ENCODE measurements at regions of chr1 and their contacts with region 1.

Region 1: DNA sequence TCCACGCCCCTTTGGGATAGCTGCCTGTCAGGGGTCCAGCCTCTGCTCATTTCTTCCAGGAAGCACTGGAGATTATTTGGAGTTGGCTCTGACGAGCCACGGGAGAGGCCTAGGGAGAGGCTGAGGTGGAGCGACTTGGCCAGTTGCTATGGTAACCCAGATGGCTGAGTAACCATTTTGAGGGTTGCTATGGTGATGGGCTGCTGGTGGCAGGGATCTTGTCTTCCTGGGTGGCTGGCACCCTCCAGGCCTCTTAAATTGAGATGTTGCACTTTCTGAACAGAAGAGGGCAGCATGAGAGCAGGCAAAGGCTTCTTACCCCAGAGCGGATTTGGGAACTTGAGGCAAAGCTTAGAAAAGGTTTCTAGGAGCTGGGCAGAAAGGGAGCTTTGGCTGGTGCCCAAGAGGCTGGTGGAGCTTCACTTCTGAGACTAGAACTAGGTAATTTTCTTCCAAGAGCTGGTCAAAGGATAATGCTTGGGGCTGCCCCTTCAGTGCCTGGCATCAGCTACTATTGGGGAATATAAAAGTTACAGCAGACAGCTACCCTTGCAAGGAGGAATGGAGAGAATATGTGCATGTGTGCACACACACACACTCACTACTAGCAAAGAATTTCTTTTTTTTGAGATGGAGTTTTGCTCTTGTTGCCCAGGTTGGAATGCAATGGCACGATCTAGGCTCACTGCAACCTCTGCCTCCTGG is 72.5 kb downstream of the NDUFS5 start:
- DNase-seq: peak; percentile 89
- H3K4me3 Mint-ChIP-seq: no peak overlapping the region
- H3K27ac Mint-ChIP-seq: peak overlapping the region; percentile 31
- H3K4me1 Mint-ChIP-seq: peaks cover 20% of the 10 kb centered on the region
- H3K27me3 Mint-ChIP-seq: no peaks in the 10 kb centered on the region

Region 2: DNA sequence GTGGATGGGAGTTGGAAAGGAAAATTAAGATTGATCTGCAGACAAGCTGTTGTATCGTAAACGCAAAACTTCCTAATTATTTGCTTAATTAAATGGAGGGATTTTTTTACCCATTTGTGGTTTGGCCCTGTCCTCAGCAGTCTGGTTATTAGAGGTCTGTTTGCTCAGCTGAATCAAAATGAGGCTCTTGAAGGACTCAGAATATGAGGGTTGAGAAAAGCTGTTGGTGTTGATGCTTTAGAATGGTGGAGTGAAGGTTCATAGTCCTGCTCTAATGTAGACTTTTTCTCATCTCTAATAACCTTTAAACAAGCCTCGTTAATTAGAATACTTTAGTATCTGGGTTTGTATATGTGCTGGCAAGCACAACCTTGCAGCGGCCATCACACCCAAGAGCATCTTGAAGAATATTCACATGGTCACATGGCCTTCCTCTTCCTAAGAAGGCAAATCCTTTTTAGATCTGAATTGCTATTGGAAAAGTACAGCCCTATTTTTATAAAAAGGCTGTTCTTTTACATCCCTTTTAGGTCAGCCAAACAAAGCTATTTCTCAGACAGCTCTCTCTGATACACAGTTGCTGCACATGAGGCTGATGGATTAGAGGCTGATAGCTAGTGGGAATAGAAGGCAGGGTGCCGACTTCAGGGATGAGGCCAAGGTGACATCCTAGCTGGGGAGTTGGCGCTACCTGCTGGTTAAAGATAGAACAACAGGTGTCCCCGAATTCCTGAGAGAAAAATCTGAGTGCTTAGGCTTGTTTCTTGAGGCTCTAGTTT is 159.6 kb after region 1 on chr1:
- intact Hi-C with region 1: loop called (anchors 1 kb)
- DNase-seq: peak; percentile 88
- H3K4me3 Mint-ChIP-seq: no peak overlapping the region
- H3K27ac Mint-ChIP-seq: peak overlapping the region; percentile 57
- H3K4me1 Mint-ChIP-seq: peaks cover 21% of the 10 kb centered on the region
- H3K27me3 Mint-ChIP-seq: no peaks in the 10 kb centered on the region

Region 3: GRCh38 chr1:39408641-39409054 is 309.9 kb after region 1 on chr1:
- intact Hi-C with region 1: loop called (anchors 10 kb)
- DNase-seq: peak; percentile 96
- H3K4me3 Mint-ChIP-seq: peak overlapping the region; percentile 90
- H3K27ac Mint-ChIP-seq: no peak overlapping the region
- H3K4me1 Mint-ChIP-seq: peaks cover 50% of the 10 kb centered on the region
- H3K27me3 Mint-ChIP-seq: no peaks in the 10 kb centered on the region

Region 4: GRCh38 chr1:39538588-39539465 is 440.1 kb after region 1 on chr1:
- intact Hi-C with region 1: loop called (anchors 1 kb)
- DNase-seq: peak; percentile 84
- H3K4me3 Mint-ChIP-seq: no peak overlapping the region
- H3K27ac Mint-ChIP-seq: peak overlapping the region; percentile 36
- H3K4me1 Mint-ChIP-seq: peaks cover 2% of the 10 kb centered on the region
- H3K27me3 Mint-ChIP-seq: no peaks in the 10 kb centered on the region

Region 5: DNA sequence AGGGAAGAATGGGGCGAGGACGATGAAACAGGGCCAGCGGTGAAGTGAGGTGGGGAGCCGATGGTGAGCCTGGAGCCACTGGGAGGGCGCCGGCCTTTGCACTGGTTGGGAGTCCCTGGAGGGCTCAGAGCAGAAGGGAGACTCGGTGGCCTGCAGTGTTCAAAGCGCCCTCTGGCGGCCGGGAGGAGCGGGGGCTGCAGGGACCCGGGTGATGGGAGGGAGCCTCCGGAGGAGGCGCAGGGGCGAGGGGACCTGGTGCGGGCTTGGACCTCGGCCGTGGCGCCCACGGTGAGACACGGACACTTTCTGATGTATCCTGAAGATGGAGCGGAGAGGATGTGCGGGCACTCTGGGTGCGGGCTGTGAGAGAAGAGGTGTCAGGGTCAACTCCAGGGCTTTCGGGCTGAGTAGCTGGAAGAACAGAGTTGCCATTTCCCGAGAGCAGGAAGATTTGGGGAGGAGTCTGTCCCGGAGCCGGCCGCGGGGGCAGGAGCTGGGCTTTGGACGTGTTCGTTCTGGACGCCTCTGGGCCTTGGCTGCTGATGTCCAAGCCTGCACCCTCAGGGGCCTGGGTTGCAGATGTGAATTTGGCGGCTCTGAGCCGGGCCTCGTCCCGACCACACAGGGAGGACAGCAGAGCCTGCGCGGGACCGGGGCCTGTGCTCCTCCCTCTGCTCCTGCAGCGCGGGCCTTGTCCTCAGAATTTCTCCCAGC is 511.1 kb after region 1 on chr1:
- intact Hi-C with region 1: loop called (anchors 1 kb)
- DNase-seq: peak; percentile 94
- H3K4me3 Mint-ChIP-seq: peak overlapping the region; percentile 27
- H3K27ac Mint-ChIP-seq: no peak overlapping the region
- H3K4me1 Mint-ChIP-seq: peaks cover 12% of the 10 kb centered on the region
- H3K27me3 Mint-ChIP-seq: no peaks in the 10 kb centered on the region

Region 6: GRCh38 chr1:39666772-39667171 is 568.1 kb after region 1 on chr1:
- intact Hi-C with region 1: loop called (anchors 2 kb)
- DNase-seq: peak; percentile 78
- H3K4me3 Mint-ChIP-seq: peak overlapping the region; percentile 20
- H3K27ac Mint-ChIP-seq: peak overlapping the region; percentile 47
- H3K4me1 Mint-ChIP-seq: peaks cover 26% of the 10 kb centered on the region
- H3K27me3 Mint-ChIP-seq: peaks cover 12% of the 10 kb centered on the region

Measured in activated CD4-positive, alpha-beta T cell treated with anti-CD3 and anti-CD28 coated beads, Interleukin-2, amount 10 ng/mL, durations not matched to agents 24 days and 14 days (primary cell).